ENCODE measurements at regions of chr4 and their contacts with region 1.

Region 1: GRCh38 chr4:77349796-77350195 is 192.8 kb downstream of the CCNG2 start:
- DNase-seq: no peak

Region 2: GRCh38 chr4:76665139-76665538 is 684.7 kb before region 1 on chr4:
- intact Hi-C with region 1: no loop called
- DNase-seq: no peak

Region 3: DNA sequence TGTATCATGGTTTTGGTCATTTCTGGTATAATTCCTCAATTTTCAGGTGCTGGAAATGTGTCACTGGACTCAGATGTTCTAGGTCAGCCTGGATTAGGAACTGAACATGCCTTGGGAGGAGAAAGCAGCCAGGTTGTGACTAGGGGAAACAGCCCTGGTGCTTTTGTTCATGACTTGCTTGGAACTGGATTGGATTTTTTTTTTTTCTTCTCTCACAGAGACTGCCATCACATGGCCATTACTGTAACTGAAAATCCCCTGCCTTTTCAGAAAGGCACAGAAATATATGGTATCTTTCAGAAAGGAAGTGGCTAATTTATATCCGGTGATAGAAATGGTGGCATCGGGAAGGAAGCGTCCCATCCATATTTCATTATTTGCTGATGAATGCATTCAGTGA is 365.7 kb before region 1 on chr4:
- intact Hi-C with region 1: no loop called
- DNase-seq: no peak

Region 4: GRCh38 chr4:77372375-77372774 is 22.6 kb after region 1 on chr4:
- intact Hi-C with region 1: loop called in 1 of 2 experiments (anchors 2 kb)
- DNase-seq: no peak

Measured in posterior vena cava (tissue), 2 donors.